Activated T-helper 2 cell treated with anti-CD3 and anti-CD28 coated beads, Interferon-gamma antibody, Interleukin-2, Interleukin-4, amounts not matched to agents 10 μg/mL and 5 μg/mL and 100 μg/mL, durations not matched to agents 14 hours and 24 hours and 36 hours (primary cell): ENCODE measurements at regions of chr17 and their contacts with region 1.

Region 1: DNA sequence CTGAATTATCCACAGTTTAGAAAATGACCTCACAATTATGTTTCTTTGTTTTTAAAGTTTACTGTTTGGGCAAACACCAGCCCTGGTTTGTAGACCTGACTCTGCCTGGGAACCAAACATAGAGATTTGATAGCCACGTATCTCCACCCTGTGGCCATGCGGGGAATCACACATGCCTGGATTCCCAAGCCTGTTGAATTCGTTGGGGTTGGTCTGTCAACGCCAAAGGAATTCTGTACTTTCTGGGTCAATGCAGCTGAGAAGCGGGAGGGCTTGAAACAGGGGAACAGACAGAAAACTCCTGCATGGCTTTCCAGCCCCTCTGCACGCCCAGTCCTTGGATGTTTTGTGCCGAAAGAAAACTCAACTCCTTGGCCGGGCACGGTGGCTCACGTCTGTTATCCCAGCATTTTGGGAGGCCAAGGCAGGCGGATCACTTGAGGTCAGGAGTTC is 27.0 kb downstream of the CD300A start:
- DNase-seq: peak; percentile 44
- H3K4me3 Mint-ChIP-seq: no peak overlapping the region
- H3K27ac Mint-ChIP-seq: no peak overlapping the region
- H3K4me1 Mint-ChIP-seq: peaks cover 11% of the 10 kb centered on the region
- H3K27me3 Mint-ChIP-seq: no peaks in the 10 kb centered on the region

Region 2: GRCh38 chr17:74325743-74326379 is 167.5 kb before region 1 on chr17 and contains the start of gene KIF19:
- intact Hi-C with region 1: no loop called
- DNase-seq: peak; percentile 51
- H3K4me3 Mint-ChIP-seq: peak within 1 kb of the TSS; percentile 26
- H3K27ac Mint-ChIP-seq: no peak within 1 kb of the TSS
- H3K4me1 Mint-ChIP-seq: peaks cover 14% of the 10 kb centered on the region
- H3K27me3 Mint-ChIP-seq: peaks cover 30% of the 10 kb centered on the region
- total RNA-seq, gene KIF19: 0.14 TPM in 1 of 2 replicates, not detected in the other

Region 3: DNA sequence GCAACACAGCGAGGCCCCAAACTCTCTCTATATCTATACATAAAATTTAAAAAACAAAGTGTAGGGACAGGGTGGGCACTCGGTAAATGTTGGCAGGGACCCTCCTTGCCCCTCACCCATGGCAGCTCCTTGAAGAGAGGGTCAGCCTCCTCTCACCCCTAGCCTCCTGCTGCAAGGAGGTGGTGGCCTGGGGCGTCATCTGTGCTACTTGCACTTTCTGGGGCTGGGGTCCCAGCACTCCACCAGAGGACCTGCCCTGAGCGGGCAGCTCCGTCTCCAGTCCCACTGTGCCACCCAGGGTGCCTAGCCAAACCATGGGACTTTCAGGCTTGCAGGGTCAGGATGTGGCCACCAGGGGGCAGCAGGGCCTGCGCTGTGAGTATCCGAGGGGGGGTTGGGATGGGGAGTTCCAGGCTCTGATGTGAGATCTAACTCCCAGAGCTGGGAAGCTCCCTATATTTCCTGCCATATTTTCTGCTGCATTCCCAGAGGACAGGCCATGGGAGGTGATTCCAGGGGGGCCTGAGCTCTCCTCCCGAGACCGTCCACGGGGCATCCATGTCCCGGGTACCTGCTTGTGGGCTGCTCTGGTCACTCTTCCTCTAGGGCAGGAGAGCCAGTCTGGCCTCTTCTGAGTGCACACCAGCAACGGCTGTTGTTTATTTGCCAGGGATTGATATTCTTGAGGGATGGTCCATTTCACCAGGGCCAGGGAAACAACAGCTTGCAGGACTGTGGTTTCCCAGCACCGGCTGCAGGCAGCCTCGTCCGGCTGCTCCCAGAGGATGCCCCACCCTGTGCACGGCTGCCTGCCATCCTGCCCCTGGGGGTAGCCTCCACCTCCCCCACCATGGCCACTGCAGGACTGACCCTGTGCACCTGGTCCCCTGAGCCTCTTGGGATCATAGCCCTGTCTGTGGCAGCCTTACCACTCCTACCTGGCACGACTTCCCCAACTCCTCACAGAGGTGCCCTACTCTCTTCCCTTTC is 125.0 kb before region 1 on chr17:
- intact Hi-C with region 1: loop called (anchors 2 kb)
- DNase-seq: peak; percentile 56
- H3K4me3 Mint-ChIP-seq: no peak overlapping the region
- H3K27ac Mint-ChIP-seq: no peak overlapping the region
- H3K4me1 Mint-ChIP-seq: peaks cover 13% of the 10 kb centered on the region
- H3K27me3 Mint-ChIP-seq: peaks cover 3% of the 10 kb centered on the region

Region 4: DNA sequence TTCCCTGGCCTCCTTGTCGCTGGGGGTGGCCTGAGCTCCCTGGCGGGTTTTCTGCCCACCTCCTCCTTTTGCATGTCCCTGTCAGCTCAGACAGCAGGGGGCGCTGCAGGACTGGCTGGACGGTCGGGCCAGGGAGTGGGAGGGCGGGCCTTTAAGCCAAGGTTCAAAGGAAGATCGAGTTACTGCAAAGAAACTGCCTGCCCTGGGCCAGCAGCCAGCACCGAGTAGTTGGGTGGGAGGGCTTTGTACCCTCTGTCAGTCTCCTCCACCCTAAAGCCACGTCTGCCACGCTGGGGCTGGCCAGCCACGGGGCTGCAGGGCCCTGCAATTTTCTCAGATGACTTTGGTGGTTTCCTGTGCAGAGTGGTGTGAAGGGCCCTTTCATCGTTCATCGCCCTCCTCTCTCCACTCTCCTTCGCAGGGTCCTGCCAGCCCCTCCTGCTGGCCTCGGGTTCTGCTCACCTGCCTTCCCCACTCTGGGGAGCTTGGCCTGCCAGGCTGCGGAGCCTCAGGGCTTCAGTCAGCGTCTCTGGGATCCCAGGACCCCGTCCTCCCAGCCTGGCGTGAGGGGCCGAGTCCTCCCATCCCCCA is 113.8 kb before region 1 on chr17:
- intact Hi-C with region 1: loop called (anchors 1 kb)
- DNase-seq: peak; percentile 82
- H3K4me3 Mint-ChIP-seq: no peak overlapping the region
- H3K27ac Mint-ChIP-seq: no peak overlapping the region
- H3K4me1 Mint-ChIP-seq: no peaks in the 10 kb centered on the region
- H3K27me3 Mint-ChIP-seq: peaks cover 7% of the 10 kb centered on the region

Region 5: DNA sequence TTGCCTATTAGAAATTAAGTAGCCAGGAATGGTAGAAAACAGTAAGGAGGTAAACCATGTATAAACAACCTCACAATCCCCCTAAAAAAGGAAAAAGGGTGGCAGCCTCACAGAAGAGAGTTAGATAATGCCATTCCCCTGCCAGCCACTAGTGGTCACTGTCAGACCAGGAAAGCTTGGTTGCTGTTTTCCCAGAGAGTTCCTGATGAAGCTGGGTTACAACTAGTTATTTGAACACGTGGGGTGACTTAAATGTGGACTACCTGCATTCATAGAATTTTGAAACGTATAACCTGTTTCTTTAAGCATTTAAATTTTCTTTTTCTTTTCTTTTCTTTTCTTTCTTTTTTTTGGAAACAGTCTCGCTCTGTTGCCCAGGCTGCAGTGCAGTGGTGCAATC is 55.7 kb before region 1 on chr17:
- intact Hi-C with region 1: loop called (anchors 2 kb)
- DNase-seq: no peak
- H3K4me3 Mint-ChIP-seq: no peak overlapping the region
- H3K27ac Mint-ChIP-seq: no peak overlapping the region
- H3K4me1 Mint-ChIP-seq: no peaks in the 10 kb centered on the region
- H3K27me3 Mint-ChIP-seq: peaks cover 26% of the 10 kb centered on the region

Region 6: GRCh38 chr17:74457146-74457819 is 36.1 kb before region 1 on chr17:
- intact Hi-C with region 1: loop called (anchors 2 kb)
- DNase-seq: peak; percentile 44
- H3K4me3 Mint-ChIP-seq: no peak overlapping the region
- H3K27ac Mint-ChIP-seq: no peak overlapping the region
- H3K4me1 Mint-ChIP-seq: peaks cover 21% of the 10 kb centered on the region
- H3K27me3 Mint-ChIP-seq: peaks cover 4% of the 10 kb centered on the region

Region 7: DNA sequence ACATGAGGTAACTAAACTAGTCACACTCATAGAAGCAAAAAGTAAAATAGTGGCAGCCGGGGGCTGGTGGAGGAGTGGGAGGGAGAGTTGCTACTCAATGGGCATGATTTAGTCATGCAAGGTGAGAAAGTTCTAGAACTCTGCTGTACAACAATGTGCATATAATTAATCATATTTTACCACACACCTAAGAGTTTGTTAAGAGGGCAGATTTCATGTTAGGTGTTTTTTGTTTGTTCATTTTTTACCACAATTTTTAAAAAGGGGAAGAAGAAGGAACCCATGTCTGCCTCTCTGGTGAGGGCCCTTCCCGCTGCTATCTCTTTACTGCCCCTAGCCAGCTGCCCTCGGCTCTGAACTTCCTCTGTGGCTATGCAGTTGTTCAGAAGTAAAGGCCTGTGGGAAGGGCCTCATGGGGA is 26.6 kb after region 1 on chr17:
- intact Hi-C with region 1: no loop called
- DNase-seq: no peak
- H3K4me3 Mint-ChIP-seq: no peak overlapping the region
- H3K27ac Mint-ChIP-seq: peak overlapping the region; percentile 31
- H3K4me1 Mint-ChIP-seq: peaks cover 16% of the 10 kb centered on the region
- H3K27me3 Mint-ChIP-seq: no peaks in the 10 kb centered on the region